CD4-positive, alpha-beta memory T cell (primary cell): ENCODE measurements at regions of chr1 and their contacts with region 1.

Region 1: DNA sequence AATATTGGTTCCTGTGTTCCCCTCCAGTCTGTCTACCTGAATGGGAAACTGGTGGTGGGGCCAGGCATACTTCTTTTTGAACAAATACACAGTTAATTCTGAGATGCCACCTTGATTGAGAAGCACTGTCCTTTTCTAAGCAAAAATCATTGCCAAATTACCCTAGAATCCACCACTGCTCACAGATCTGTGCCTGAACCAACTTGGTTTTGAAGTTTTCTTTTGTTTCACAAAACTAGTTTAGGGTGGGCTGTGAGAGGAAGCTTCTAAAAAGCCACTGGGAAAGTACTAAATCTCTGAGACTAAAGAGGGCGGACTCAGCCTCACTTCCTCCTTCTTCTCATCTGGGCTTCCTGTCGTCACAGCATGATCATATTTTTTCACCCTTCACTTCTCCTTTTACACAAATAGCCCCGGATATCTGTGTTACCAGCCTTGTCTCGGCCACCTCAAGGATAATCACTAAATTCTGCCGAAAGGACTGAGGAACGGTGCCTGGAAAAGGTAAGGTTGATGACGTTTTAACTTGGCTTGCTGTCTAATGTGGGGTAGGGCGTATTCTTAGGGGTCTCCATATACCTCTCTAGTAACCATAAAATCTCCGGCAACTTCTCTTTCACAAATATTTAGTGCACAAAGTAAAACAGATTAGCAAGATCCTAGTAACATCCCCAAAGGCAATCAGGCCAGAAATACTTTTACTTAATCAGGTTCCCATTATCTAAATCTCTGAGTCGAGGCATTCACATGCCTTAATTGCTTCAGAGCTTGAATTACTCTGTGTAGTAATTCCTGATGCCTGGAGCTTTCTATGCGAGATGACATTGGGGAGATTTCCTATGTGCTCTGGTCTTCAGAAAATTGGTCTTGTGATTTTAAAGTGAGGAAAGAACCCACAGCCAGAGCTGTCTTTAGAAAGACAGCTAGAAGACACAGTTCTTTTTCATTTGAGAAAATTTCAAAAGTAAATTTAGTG is at the start of gene CD53:
- DNase-seq: peak; percentile 70 to 82 (median 73)
- H3K4me3 ChIP-seq: peak within 1 kb of the TSS; percentile 79 to 92
- H3K4me3 Mint-ChIP-seq: peak within 1 kb of the TSS; percentile 94 to 100 (median 98)
- H3K27ac ChIP-seq: peak within 1 kb of the TSS; percentile 88
- H3K27ac Mint-ChIP-seq: peak within 1 kb of the TSS; percentile 93 to 99 (median 98)
- H3K4me1 ChIP-seq: peaks cover 54% of the 10 kb centered on the region
- H3K4me1 Mint-ChIP-seq: peaks cover 43 to 79% (median 52%) of the 10 kb centered on the region in 4 donors
- H3K27me3 ChIP-seq: no peaks in the 10 kb centered on the region
- H3K27me3 Mint-ChIP-seq: no peaks in the 10 kb centered on the region
- total RNA-seq, gene CD53: 337 to 338 TPM

Region 2: DNA sequence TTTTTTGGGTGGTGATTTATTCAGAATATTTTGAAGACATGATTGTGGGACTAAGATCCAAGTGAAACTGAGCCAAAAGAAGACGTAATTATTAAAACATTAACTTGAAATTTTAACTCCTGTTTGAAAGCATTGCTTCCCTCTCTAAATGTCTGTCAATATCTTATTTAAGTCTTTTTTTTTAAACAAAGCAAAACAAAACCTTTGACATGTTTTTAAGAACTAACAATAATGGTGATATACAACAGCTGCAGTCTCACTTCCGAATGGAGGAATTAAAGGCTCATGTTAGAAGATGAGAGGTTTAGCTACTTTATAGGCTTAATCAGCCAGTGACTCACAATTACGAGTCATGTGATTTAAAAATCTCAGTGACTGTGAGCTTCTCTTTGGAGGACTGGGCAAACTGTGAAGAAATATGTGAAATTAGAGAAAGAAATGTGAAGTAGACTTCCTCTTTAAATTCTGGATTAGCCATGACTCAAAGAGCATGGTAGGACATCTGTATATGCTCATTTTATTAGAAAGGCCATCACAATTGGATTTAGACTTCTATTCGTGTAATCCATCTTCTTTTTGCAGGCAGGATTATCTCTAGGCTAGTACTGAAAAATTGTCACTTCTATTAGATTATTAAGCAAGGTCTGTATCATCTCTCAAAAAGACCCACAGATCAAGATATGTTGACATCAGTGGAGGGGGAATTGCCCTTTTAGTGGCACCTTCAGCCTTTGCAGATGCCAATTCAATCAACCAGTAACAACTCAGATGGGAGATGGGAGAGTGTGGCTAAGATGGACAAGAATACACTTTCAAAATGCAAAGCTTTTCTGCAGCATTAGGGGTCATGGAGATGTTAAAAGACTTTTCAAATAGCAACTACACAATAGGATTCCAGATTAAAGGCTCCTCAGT is 227.0 kb before region 1 on chr1:
- CTCF ChIA-PET with region 1: no interaction called
- POLR2A ChIA-PET with region 1: interaction called, 5 read pairs
- intact Hi-C with region 1: loop called (anchors 10 kb)
- DNase-seq: no peak
- H3K4me3 ChIP-seq: peak overlapping the region in 1 of 2 donors; percentile 2
- H3K4me3 Mint-ChIP-seq: peak overlapping the region in 5 of 8 donors; percentile 21 to 66 (median 44)
- H3K27ac ChIP-seq: peak overlapping the region; percentile 56
- H3K27ac Mint-ChIP-seq: peak overlapping the region in 6 of 7 donors; percentile 31 to 83 (median 62)
- H3K4me1 ChIP-seq: peaks cover 99% of the 10 kb centered on the region
- H3K4me1 Mint-ChIP-seq: peaks cover 11 to 51% (median 40%) of the 10 kb centered on the region in 4 donors
- H3K27me3 ChIP-seq: no peaks in the 10 kb centered on the region
- H3K27me3 Mint-ChIP-seq: no peaks in the 10 kb centered on the region

Region 3: GRCh38 chr1:110829955-110830553 is 43.0 kb before region 1 on chr1:
- CTCF ChIA-PET with region 1: interaction called, 13 read pairs
- POLR2A ChIA-PET with region 1: interaction called, 3 read pairs
- intact Hi-C with region 1: loop called (anchors 2 kb)
- DNase-seq: peak; percentile 41 to 63 (median 57)
- H3K4me3 ChIP-seq: no peak overlapping the region
- H3K4me3 Mint-ChIP-seq: no peak overlapping the region
- H3K27ac ChIP-seq: no peak overlapping the region
- H3K27ac Mint-ChIP-seq: peak overlapping the region in 1 of 7 donors; percentile 42
- H3K4me1 ChIP-seq: peaks cover 7% of the 10 kb centered on the region
- H3K4me1 Mint-ChIP-seq: peaks cover 5 to 8% (median 7%) of the 10 kb centered on the region in 4 donors
- H3K27me3 ChIP-seq: no peaks in the 10 kb centered on the region
- H3K27me3 Mint-ChIP-seq: peaks cover 0 to 10% of the 10 kb centered on the region in 2 donors

Region 4: DNA sequence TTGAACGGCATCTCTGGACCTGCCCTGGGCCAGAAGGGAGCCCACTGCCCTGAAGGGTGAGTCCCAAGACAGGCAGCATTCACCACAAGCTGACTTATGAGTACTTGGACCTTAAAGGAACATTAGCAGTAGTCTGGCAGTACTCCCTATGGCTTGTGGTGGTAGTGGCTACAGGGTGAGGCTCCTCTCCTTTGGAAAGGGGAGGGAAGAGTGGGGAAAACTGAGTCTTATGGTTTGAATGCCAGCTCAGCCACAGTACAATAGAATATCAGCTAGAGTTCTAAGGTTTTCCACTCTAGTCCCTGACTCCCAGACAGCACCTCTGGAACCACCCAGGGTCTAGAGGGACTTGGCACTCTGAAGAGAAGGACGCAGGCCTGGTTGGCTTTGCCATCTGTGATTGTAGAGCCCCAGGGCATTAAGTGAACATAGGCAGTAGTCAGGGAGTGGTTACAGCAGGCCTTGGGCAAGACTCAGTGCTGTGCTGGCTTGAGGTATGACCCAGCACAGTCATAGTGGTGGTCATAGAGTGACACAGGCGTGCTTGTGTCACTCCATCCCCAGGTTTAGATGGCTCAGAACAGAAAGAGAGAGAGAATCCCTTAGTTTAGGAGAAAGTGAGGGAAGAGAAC is 30.9 kb after region 1 on chr1:
- CTCF ChIA-PET with region 1: no interaction called
- POLR2A ChIA-PET with region 1: interaction called, 28 read pairs
- intact Hi-C with region 1: no loop called
- DNase-seq: no peak
- H3K4me3 ChIP-seq: no peak overlapping the region
- H3K4me3 Mint-ChIP-seq: no peak overlapping the region
- H3K27ac ChIP-seq: no peak overlapping the region
- H3K27ac Mint-ChIP-seq: peak overlapping the region in 4 of 7 donors; percentile 7 to 74 (median 40)
- H3K4me1 ChIP-seq: peaks cover 3% of the 10 kb centered on the region
- H3K4me1 Mint-ChIP-seq: peaks cover 18 to 24% (median 21%) of the 10 kb centered on the region in 4 donors
- H3K27me3 ChIP-seq: no peaks in the 10 kb centered on the region
- H3K27me3 Mint-ChIP-seq: no peaks in the 10 kb centered on the region

Region 5: GRCh38 chr1:111139956-111140679 is 267.1 kb after region 1 on chr1 and contains the starts of genes CEPT1 and DRAM2:
- CTCF ChIA-PET with region 1: no interaction called
- POLR2A ChIA-PET with region 1: interaction called, 4 read pairs
- intact Hi-C with region 1: loop called (anchors 1 kb)
- DNase-seq: peak; percentile 89 to 95 (median 91)
- H3K4me3 ChIP-seq: peak within 1 kb of the TSS; percentile 57 to 97
- H3K4me3 Mint-ChIP-seq: peak within 1 kb of the TSS; percentile 98 to 100 (median 100)
- H3K27ac ChIP-seq: peak within 1 kb of the TSS; percentile 79
- H3K27ac Mint-ChIP-seq: peak within 1 kb of the TSS; percentile 84 to 100 (median 99)
- H3K4me1 ChIP-seq: peaks cover 54% of the 10 kb centered on the region
- H3K4me1 Mint-ChIP-seq: peaks cover 32 to 54% (median 41%) of the 10 kb centered on the region in 4 donors
- H3K27me3 ChIP-seq: no peaks in the 10 kb centered on the region
- H3K27me3 Mint-ChIP-seq: no peaks in the 10 kb centered on the region
- total RNA-seq, gene CEPT1: 49.1 to 49.6 TPM
- total RNA-seq, gene DRAM2: 37.5 to 38.8 TPM

Region 6: GRCh38 chr1:111346089-111346885 is 473.3 kb after region 1 on chr1:
- CTCF ChIA-PET with region 1: no interaction called
- POLR2A ChIA-PET with region 1: no interaction called
- intact Hi-C with region 1: no loop called
- DNase-seq: peak; percentile 92 to 94 (median 94)
- H3K4me3 ChIP-seq: peak overlapping the region; percentile 59 to 82
- H3K4me3 Mint-ChIP-seq: peak overlapping the region; percentile 87 to 96 (median 92)
- H3K27ac ChIP-seq: peak overlapping the region; percentile 46
- H3K27ac Mint-ChIP-seq: peak overlapping the region; percentile 84 to 97 (median 96)
- H3K4me1 ChIP-seq: peaks cover 16% of the 10 kb centered on the region
- H3K4me1 Mint-ChIP-seq: peaks cover 13 to 25% (median 18%) of the 10 kb centered on the region in 4 donors
- H3K27me3 ChIP-seq: no peaks in the 10 kb centered on the region
- H3K27me3 Mint-ChIP-seq: no peaks in the 10 kb centered on the region